Head of caudate nucleus (tissue), 42 donors: ENCODE measurements at regions of chr15 and their contacts with region 1.

Region 1: GRCh38 chr15:26891448-26892181 is 24.8 kb downstream of the GABRA5 start:
- DNase-seq: peak; percentile 65 to 91 (median 81)

Region 2: DNA sequence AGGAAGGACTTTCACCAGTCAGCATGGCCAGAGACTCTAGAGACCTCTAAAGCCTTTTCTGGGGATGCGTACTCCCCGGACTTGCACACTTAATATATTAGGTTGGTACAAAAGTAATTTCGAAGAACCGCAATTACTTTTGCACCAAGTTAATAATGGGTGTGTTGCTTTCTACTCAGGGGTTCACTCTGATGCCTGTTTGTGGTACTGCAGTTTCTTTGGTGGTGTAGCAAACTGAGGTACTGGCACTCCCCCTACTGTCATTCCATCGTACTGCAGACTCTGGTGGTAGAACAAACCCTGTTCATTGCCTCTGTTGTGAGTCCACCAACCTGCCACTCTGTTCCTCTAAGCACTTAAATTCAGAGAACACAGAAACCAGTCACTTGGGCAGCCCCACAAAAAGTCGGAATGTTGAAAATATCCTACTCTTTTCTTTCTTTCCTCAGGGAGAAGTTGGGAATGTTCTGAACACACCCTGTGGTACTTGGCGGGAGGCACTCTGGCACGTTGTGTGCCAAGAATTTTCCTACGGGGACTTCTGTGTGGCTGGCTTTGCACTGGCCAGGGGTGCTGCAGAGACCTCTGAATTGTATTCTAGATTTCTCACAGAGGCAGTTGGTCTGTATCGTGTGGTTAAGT is 125.7 kb after region 1 on chr15:
- intact Hi-C with region 1: loop called (anchors 5 kb)
- DNase-seq: peak in 35 of 42 donors; percentile 18 to 90 (median 69)

Region 3: DNA sequence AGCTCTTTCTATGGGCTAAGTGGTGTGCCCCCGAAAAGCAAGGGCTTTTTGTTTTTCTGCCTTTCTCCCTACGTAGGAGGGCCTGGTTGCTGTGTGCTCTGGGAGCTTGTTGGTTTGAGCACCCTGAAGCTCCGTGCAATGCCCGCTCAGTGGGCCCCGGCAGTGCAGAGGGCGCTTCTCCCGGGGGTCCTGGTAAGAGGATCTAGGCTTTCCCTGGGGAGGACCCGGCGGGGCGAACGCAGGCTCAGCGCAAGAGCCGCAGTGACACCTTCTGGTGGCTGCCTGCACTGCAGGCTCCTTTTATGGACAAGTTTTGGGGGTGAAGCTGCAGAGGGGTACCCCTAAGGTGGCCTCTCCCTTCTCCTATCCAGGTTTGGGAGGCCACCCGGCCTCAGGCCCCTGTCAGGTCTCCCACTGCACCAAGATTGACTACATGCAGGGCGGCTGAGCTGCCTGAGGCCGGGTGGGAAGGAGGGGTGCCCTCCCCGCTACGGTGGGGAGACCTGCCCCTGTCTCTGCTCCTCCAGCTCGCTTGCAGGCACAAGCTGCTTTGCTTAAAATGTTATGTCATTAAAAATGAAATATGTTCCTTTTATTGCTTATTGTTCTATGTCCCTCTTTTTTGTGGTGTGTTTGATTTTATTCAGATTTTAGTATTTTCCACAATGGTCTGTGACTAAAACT is 467.3 kb after region 1 on chr15:
- intact Hi-C with region 1: loop called (anchors 5 kb)
- DNase-seq: peak; percentile 13 to 79 (median 58)